ENCODE measurements at regions of chr6 and their contacts with region 1.

Region 1: GRCh38 chr6:142387997-142388815 is 86.4 kb downstream of the ADGRG6 start:
- DNase-seq: peak; percentile 74
- ATAC-seq: peak; percentile 97
- H3K4me3 ChIP-seq: no peak overlapping the region
- H3K27ac ChIP-seq: no peak overlapping the region
- H3K4me1 ChIP-seq: peaks cover 5% of the 10 kb centered on the region
- H3K27me3 ChIP-seq: no peaks in the 10 kb centered on the region
- CTCF ChIP-seq: peak; percentile 79
- POLR2A ChIP-seq: no peak
- RAD21 ChIP-seq: peak; percentile 83

Region 2: DNA sequence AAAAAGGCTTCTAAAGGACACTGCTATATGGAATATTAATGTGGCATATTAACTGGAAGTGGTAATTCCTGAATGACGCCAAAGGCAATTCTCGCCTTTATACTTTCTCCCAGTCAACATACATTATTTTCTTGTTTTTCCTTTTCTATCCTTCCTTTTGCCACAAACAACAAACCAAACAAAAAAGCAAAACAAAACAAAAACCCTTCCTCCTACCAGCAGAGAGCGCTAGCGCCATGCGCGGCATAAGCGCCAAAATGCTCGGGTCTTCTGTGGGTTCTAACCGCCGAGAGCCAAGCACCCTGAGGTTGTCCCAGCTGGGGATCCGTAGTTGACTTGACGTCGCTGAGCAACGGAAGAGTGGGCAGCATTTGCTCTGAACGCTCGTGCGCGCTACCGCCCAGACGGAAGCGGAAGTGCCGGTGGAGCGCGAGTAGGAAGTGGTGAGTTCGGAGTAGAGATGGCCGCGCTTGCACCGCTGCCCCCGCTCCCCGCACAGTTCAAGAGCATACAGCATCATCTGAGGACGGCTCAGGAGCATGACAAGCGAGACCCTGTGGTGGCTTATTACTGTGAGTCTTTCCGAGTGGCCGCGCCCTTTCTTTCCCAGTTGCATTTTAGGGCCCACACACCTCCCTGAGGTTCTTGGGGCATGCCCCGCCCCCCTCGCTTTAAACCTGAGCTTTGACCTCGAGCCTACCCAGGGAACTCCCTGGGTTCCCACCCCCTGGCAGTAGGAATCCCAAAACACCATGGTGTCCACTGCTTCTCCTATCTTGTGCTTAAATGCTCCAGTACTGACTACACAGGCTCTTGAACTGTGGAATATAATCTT is 241.2 kb before region 1 on chr6 and contains the starts of genes NMBR and VTA1:
- CTCF ChIA-PET with region 1: interaction called, 4 read pairs
- POLR2A ChIA-PET with region 1: no interaction called
- dilution Hi-C with region 1: no loop called
- in situ Hi-C with region 1: loop called (anchors 10 kb)
- intact Hi-C with region 1: loop called (anchors 1 kb)
- DNase-seq: peak; percentile 100
- ATAC-seq: peak; percentile 97
- H3K4me3 ChIP-seq: peak within 1 kb of the TSS; percentile 77
- H3K27ac ChIP-seq: peak within 1 kb of the TSS; percentile 78
- H3K4me1 ChIP-seq: peaks cover 6% of the 10 kb centered on the region
- H3K27me3 ChIP-seq: no peaks in the 10 kb centered on the region
- CTCF ChIP-seq: peak; percentile 97
- POLR2A ChIP-seq: peak; percentile 56; the same call in 1 of the 2 replicates
- RAD21 ChIP-seq: peak; percentile 91
- total RNA-seq, gene NMBR: not detected in 2 replicates
- total RNA-seq, gene VTA1: 104 and 120 TPM in 2 replicates

Region 3: GRCh38 chr6:142225115-142225514 is 163.1 kb before region 1 on chr6:
- CTCF ChIA-PET with region 1: no interaction called
- POLR2A ChIA-PET with region 1: no interaction called
- dilution Hi-C with region 1: no loop called
- in situ Hi-C with region 1: no loop called
- intact Hi-C with region 1: loop called (anchors 5 kb)
- DNase-seq: no peak
- ATAC-seq: no peak
- H3K4me3 ChIP-seq: no peak overlapping the region
- H3K27ac ChIP-seq: no peak overlapping the region
- H3K4me1 ChIP-seq: no peaks in the 10 kb centered on the region
- H3K27me3 ChIP-seq: no peaks in the 10 kb centered on the region
- CTCF ChIP-seq: no peak
- POLR2A ChIP-seq: no peak
- RAD21 ChIP-seq: no peak

Region 4: DNA sequence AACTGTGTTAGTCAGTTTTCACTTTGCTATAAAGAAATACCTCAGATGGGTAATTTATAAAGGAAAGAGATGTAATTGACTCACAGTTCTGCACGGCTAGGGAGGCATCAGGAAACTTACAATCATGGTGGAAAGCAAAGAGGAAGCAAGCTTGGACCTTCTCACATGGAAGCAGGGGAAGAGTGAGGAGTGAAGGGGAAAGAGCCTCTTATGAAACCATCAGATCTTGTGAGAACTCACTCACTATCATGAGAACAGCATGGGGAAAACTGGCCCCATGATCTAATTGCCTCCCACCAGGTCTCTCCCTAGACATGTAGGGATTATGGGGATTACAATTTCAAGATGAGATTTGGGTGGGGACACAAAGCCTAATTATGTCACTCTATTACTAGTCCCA is 1661.2 kb after region 1 on chr6:
- CTCF ChIA-PET with region 1: no interaction called
- POLR2A ChIA-PET with region 1: no interaction called
- dilution Hi-C with region 1: no loop called
- in situ Hi-C with region 1: no loop called
- intact Hi-C with region 1: no loop called
- DNase-seq: no peak
- ATAC-seq: no peak
- H3K4me3 ChIP-seq: no peak overlapping the region
- H3K27ac ChIP-seq: no peak overlapping the region
- H3K4me1 ChIP-seq: no peaks in the 10 kb centered on the region
- H3K27me3 ChIP-seq: peaks cover 11% of the 10 kb centered on the region
- CTCF ChIP-seq: no peak
- POLR2A ChIP-seq: no peak
- RAD21 ChIP-seq: no peak